Heart right ventricle (tissue), 16 donors: ENCODE measurements at regions of chr7 and their contacts with region 1.

Region 1: DNA sequence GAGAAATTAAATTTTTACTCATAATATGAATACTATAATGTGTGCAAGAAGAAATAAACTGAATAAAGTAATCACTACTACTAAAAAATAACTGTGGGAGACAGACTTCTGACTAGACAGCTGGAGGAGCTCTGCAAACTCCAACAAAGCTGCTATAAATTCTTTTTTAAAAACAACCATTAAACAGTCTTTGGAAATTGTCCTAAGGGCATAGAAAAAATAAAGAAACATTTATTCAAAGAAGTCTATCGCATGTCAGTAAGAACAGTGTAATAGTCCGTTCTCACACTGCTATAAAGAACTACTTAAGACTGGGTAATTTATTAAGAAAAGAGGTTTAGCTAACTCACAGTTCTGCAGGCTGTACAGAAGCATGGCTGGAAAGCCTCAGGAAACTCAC is 56.0 kb downstream of the ZPBP start:
- DNase-seq: no peak
- ATAC-seq: no peak
- H3K4me3 ChIP-seq: no peak overlapping the region
- H3K27ac ChIP-seq: no peak overlapping the region
- H3K4me1 ChIP-seq: no peaks in the 10 kb centered on the region
- H3K27me3 ChIP-seq: peaks cover 0 to 8% (median 0%) of the 10 kb centered on the region in 7 donors
- CTCF ChIP-seq: no peak

Region 2: GRCh38 chr7:50022991-50023390 is 14.1 kb before region 1 on chr7:
- intact Hi-C with region 1: loop called in 1 of 10 experiments (anchors 1 kb)
- DNase-seq: no peak
- ATAC-seq: no peak
- H3K4me3 ChIP-seq: no peak overlapping the region
- H3K27ac ChIP-seq: no peak overlapping the region
- H3K4me1 ChIP-seq: no peaks in the 10 kb centered on the region
- H3K27me3 ChIP-seq: no peaks in the 10 kb centered on the region
- CTCF ChIP-seq: no peak